Sigmoid colon (tissue), 7 donors: ENCODE measurements at regions of chr6 and their contacts with region 1.

Region 1: GRCh38 chr6:28838634-28839442 is 84.9 kb downstream of the TRIM27 start:
- DNase-seq: peak; percentile 90
- H3K4me3 ChIP-seq: peak overlapping the region; percentile 47 to 59 (median 58)
- H3K27ac ChIP-seq: peak overlapping the region; percentile 76 to 80 (median 78)
- H3K4me1 ChIP-seq: peaks cover 0 to 16% (median 11%) of the 10 kb centered on the region in 4 donors
- H3K27me3 ChIP-seq: peaks cover 0 to 16% (median 1%) of the 10 kb centered on the region in 3 donors
- CTCF ChIP-seq: peak; percentile 16 to 60 (median 27)
- EP300 ChIP-seq: no peak
- POLR2A ChIP-seq: no peak

Region 2: DNA sequence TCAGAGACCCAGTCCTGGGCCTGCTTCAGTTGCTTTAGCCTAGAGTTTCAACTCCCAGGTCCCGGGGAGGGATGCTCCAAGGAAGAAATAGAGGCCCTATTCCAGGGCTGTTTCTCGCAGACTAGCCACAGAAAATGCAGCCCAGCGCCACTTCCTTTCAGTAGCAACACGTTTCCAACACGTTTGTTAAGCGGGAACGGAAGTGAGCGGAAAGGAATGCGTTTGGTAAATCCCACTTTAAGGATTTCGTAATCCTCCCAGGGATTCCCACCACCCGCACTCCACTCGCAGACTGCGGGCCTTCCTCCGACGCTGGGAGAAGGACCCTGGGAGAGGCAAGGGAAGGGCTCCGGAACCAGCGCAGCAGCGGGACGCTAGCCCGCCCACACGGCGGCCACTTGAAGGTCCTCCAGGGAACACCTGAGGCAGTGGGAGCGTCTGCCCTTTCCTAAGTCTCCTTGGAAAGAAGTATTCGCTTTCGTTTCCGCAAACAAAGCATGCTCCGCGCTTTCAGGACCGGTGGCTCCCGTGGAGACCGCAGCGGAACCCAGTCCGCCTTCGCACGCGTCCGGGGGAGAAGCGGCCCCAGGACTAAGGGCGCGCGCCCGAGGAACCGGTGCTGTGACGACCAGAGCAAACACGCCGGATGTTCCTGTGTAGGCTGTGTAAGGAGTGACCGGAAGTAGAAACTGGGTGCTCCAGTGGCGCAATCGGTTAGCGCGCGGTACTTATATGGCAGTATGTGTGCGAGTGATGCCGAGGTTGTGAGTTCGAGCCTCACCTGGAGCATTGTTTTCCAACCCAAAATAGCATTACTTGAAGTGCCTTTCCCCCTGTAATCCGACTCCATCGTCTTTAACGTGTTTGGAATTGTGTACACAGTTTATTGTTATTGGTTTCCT is 1818.9 kb before region 1 on chr6:
- intact Hi-C with region 1: loop called (anchors 5 kb)
- DNase-seq: peak; percentile 95
- H3K4me3 ChIP-seq: peak overlapping the region; percentile 56 to 74 (median 60)
- H3K27ac ChIP-seq: peak overlapping the region; percentile 82 to 94 (median 90)
- H3K4me1 ChIP-seq: peaks cover 3 to 15% (median 6%) of the 10 kb centered on the region in 4 donors
- H3K27me3 ChIP-seq: no peaks in the 10 kb centered on the region
- CTCF ChIP-seq: no peak
- EP300 ChIP-seq: no peak
- POLR2A ChIP-seq: peak; percentile 72 to 81

Region 3: GRCh38 chr6:28683944-28684538 is 154.8 kb before region 1 on chr6:
- intact Hi-C with region 1: loop called (anchors 2 kb)
- DNase-seq: no peak
- H3K4me3 ChIP-seq: no peak overlapping the region
- H3K27ac ChIP-seq: no peak overlapping the region
- H3K4me1 ChIP-seq: no peaks in the 10 kb centered on the region
- H3K27me3 ChIP-seq: peaks cover 0 to 75% (median 18%) of the 10 kb centered on the region in 3 donors
- CTCF ChIP-seq: peak in 2 of 4 experiments; percentile 17 to 25
- EP300 ChIP-seq: no peak
- POLR2A ChIP-seq: no peak

Region 4: DNA sequence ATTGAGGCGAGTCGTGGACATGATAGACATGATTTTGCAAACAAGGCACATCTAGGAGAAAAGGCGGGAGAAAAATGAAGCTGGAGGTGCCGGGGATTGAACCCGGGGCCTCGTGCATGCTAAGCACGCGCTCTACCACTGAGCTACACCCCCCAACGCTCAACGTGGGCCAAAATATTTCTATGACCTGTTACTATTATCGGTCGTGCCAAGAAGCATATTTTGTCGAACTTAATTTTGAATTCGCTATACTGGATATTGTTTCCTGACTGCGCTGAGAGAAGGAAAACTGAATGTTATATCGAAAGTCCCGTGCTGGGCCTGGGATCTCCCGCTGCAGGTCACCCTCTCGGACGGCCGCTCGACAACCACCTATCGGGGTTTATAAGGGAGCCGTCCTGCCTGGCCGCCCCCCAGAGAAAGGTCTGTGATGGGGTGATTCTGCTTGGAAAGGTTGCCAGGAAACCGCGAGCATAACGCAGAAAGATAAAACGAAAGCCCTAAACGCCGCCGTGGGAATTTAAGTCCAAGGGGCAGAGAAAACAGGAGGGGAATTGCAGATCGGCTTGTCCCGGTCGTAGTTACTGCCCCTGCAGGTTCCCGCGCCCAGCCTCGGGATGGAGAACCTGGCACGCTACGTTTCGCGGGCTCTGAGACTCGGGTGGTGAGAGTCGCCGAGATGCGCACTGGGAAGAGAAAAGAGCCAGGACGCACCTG is 24.9 kb after region 1 on chr6:
- intact Hi-C with region 1: loop called (anchors 2 kb)
- DNase-seq: peak; percentile 86
- H3K4me3 ChIP-seq: peak overlapping the region; percentile 62 to 73 (median 67)
- H3K27ac ChIP-seq: peak overlapping the region; percentile 71 to 81 (median 79)
- H3K4me1 ChIP-seq: peaks cover 0 to 21% (median 10%) of the 10 kb centered on the region in 4 donors
- H3K27me3 ChIP-seq: no peaks in the 10 kb centered on the region
- CTCF ChIP-seq: no peak
- EP300 ChIP-seq: no peak
- POLR2A ChIP-seq: no peak

Region 5: GRCh38 chr6:28895134-28895812 is 56.4 kb after region 1 on chr6:
- intact Hi-C with region 1: loop called (anchors 2 kb)
- DNase-seq: peak; percentile 97
- H3K4me3 ChIP-seq: peak overlapping the region; percentile 58 to 76 (median 70)
- H3K27ac ChIP-seq: peak overlapping the region; percentile 96 to 99 (median 97)
- H3K4me1 ChIP-seq: peaks cover 0 to 16% (median 7%) of the 10 kb centered on the region in 4 donors
- H3K27me3 ChIP-seq: no peaks in the 10 kb centered on the region
- CTCF ChIP-seq: no peak
- EP300 ChIP-seq: no peak
- POLR2A ChIP-seq: peak; percentile 38 to 64

Region 6: GRCh38 chr6:29016559-29017427 is 178.0 kb after region 1 on chr6:
- intact Hi-C with region 1: loop called (anchors 1 kb)
- DNase-seq: peak; percentile 86
- H3K4me3 ChIP-seq: peak overlapping the region; percentile 41 to 62 (median 50)
- H3K27ac ChIP-seq: peak overlapping the region; percentile 19 to 61 (median 44)
- H3K4me1 ChIP-seq: peaks cover 0 to 24% (median 11%) of the 10 kb centered on the region in 4 donors
- H3K27me3 ChIP-seq: peaks cover 9 to 22% (median 17%) of the 10 kb centered on the region in 3 donors
- CTCF ChIP-seq: peak; percentile 70 to 80 (median 74)
- EP300 ChIP-seq: no peak
- POLR2A ChIP-seq: no peak